ENCODE measurements at regions of chr18 and their contacts with region 1.

Region 1: DNA sequence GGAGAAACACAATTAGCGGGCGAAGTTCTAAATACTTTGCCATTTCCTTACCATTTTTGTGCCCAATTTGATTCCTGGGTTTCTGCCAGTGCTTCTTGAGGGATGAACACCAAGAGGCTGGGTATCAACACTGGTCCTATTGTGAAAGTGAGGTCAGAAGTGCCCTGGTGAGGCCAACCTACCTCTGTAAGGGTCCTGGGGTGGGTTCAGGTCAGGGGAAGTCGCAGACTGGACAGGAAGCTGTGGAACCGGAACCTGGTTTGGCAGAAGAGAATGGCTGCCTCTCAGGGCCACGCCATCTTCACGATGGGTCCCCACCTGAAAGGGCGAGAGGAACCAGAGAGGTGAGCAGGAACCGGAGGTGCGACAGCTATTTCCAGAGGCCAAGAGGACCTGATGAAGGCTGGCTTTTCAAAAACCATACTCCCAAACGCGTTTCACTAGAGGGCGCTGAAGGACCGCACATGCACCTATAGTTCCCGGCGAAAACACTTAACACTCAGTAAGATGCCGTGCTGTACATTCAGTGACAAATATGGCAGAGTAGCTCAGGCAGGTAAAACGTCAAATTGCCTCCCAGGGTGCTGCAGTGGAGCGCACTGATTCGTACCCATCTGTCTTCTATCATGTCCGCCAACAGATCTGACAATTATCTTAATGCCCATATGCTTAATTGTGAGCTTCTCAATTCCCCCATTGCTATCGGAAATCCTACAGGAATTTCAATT is 275.3 kb upstream of the CCDC68 start:
- DNase-seq: peak; percentile 48 to 79 (median 52)
- ATAC-seq: peak; percentile 93
- H3K4me3 ChIP-seq: no peak overlapping the region
- H3K27ac ChIP-seq: no peak overlapping the region
- H3K4me1 ChIP-seq: no peaks in the 10 kb centered on the region
- H3K27me3 ChIP-seq: no peaks in the 10 kb centered on the region
- CTCF ChIP-seq: peak; percentile 72 to 81 (median 78)
- EP300 ChIP-seq: no peak
- POLR2A ChIP-seq: no peak
- RAD21 ChIP-seq: peak; percentile 69 to 88

Region 2: DNA sequence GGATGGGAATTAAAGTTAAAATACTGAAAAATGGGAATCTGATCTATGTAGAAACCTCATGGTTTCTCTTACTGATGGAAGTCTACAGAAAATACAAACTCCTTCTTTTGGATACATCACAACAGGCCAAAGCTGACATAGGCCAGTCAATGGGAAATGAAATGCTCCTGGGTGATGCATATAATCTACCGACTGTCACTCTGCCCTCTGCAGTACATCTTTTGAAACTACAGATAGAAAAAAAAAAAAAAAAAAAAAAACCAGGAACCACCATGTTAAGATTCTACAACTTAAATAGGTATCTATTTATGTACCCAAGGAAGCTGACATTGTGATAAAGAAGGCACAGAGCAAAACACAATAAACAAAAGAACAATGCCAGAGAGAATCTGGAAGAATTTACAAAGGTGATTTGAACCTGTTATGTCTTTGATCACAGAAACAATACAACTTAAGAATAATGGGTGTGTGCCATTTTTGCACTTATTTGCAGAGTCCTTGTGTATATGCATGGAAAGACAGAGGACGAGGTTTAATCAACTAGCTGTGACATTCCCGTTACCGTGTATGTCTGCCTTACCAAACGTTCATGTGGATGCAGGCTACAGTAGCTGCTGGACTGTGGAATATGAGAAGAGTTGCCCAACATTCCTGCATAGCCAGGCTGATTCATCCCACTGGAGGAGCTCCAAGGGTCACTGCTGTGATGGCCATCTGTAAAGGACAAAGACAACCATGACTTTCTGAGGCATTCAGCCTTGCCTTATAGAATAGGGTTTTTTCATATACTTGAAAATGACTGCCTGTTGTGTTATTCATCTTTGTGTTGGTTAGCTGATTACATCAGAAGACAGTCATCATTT is 40.7 kb after region 1 on chr18:
- CTCF ChIA-PET with region 1: no interaction called
- POLR2A ChIA-PET with region 1: no interaction called
- in situ Hi-C with region 1: no loop called
- intact Hi-C with region 1: loop called (anchors 1 kb)
- DNase-seq: peak in 1 of 4 experiments; percentile 19
- ATAC-seq: peak; percentile 49; the same call in 1 of the 3 replicates
- H3K4me3 ChIP-seq: no peak overlapping the region
- H3K27ac ChIP-seq: no peak overlapping the region
- H3K4me1 ChIP-seq: no peaks in the 10 kb centered on the region
- H3K27me3 ChIP-seq: no peaks in the 10 kb centered on the region
- CTCF ChIP-seq: peak in 1 of 3 experiments; percentile 33; a peak in 2 of 6 replicates
- EP300 ChIP-seq: no peak
- POLR2A ChIP-seq: no peak
- RAD21 ChIP-seq: no peak

Region 3: DNA sequence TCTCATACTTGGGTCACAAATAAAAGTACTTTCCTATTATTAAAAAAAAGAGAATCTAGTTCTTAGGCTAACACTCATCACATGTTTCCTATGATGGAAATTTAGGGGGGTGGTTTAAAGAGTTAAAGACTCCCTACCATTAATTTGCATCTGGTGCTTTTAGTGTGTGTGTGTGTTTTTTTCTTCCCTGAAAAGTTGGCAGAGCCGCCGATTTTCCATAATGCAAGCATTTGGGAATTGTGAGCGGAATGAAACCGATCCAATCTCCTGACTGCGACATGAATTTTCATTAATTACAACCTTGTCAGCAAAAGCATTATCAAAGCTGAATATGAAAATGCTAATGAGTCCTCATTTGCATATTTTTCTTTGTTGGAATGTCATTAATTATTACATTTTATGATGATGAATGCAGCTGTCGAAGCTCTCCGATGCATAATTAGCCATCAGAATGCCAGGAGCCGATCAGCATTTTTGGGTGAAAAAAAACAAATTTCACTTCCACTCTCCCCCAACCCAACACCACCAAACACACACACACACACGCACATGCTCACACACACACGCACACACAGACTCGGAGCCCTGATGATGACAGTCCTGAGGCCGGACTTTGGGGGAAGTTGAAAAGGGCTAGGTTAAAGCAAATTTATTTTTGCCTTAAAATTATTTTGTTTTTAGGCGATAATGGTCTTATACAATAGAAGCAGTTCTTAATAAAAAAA is 188.1 kb after region 1 on chr18:
- CTCF ChIA-PET with region 1: no interaction called
- POLR2A ChIA-PET with region 1: no interaction called
- in situ Hi-C with region 1: no loop called
- intact Hi-C with region 1: loop called (anchors 10 kb)
- DNase-seq: no peak
- ATAC-seq: no peak
- H3K4me3 ChIP-seq: no peak overlapping the region
- H3K27ac ChIP-seq: no peak overlapping the region
- H3K4me1 ChIP-seq: no peaks in the 10 kb centered on the region; a peak in 1 of 5 replicates
- H3K27me3 ChIP-seq: no peaks in the 10 kb centered on the region
- CTCF ChIP-seq: no peak
- EP300 ChIP-seq: no peak
- POLR2A ChIP-seq: no peak
- RAD21 ChIP-seq: no peak

Region 4: GRCh38 chr18:55781481-55781957 is 547.0 kb after region 1 on chr18:
- CTCF ChIA-PET with region 1: interaction called, 8 read pairs
- POLR2A ChIA-PET with region 1: no interaction called
- in situ Hi-C with region 1: loop called (anchors 25 kb)
- intact Hi-C with region 1: loop called (anchors 1 kb)
- DNase-seq: peak in 3 of 4 experiments; percentile 11 to 54 (median 42)
- ATAC-seq: peak; percentile 75; the same call in 2 of the 3 replicates
- H3K4me3 ChIP-seq: no peak overlapping the region
- H3K27ac ChIP-seq: no peak overlapping the region
- H3K4me1 ChIP-seq: peaks cover 3 to 10% of the 10 kb centered on the region in 2 experiments; a peak in 4 of 5 replicates
- H3K27me3 ChIP-seq: no peaks in the 10 kb centered on the region
- CTCF ChIP-seq: peak; percentile 49 to 66 (median 64); a peak in 5 of 6 replicates
- EP300 ChIP-seq: no peak
- POLR2A ChIP-seq: no peak
- RAD21 ChIP-seq: peak; percentile 80 to 83

Region 5: GRCh38 chr18:56563568-56563967 is 1329.0 kb after region 1 on chr18:
- CTCF ChIA-PET with region 1: no interaction called
- POLR2A ChIA-PET with region 1: no interaction called
- in situ Hi-C with region 1: loop called (anchors 25 kb)
- intact Hi-C with region 1: no loop called
- DNase-seq: peak; percentile 41 to 68 (median 58)
- ATAC-seq: peak; percentile 99
- H3K4me3 ChIP-seq: no peak overlapping the region
- H3K27ac ChIP-seq: no peak overlapping the region
- H3K4me1 ChIP-seq: peaks cover 0 to 3% of the 10 kb centered on the region in 2 experiments; a peak in 2 of 5 replicates
- H3K27me3 ChIP-seq: peaks cover 0 to 3% of the 10 kb centered on the region in 2 experiments; a peak in 2 of 5 replicates
- CTCF ChIP-seq: peak; percentile 73 to 99 (median 76)
- EP300 ChIP-seq: no peak
- POLR2A ChIP-seq: no peak
- RAD21 ChIP-seq: peak; percentile 28 to 65; a peak in 2 of 4 replicates

Region 6: DNA sequence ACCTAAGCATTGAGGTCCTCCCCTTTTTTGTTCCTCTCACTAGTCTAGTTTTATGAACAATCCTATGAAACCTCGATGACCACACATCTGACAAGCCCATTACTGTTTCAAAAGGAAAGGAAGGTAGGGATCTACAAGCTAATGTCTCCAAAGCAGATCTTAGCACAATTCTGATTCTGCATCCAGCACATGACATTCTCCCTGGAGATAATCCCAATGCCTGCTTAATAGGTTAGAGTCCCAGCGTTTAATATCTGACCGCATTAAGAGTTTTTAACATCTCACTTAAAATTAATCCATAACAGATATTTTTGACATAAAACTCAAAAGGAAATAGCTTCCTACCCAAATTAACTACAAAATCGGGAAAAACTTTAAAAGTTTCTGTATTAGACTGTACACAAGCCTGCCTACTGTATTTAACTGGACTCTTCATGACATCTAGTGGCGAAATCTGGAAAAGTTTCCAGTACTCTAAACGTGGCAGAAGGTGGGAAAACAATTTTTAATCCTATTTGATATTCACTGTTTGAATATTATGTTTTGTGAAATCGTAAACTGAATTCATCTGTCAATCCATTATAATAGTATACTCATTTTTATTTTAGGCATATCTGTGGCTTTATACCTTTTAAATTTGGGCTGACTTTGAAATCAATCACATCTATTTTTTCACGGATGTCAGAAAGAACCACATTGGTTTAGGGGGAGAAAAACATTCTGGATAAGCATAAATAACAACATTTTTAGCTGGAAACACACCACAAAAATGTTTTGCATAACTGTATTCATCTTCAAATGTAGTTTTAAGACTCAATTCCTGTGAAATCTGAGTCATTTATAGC is 1341.5 kb after region 1 on chr18:
- CTCF ChIA-PET with region 1: interaction called, 10 read pairs
- POLR2A ChIA-PET with region 1: no interaction called
- in situ Hi-C with region 1: loop called (anchors 25 kb)
- intact Hi-C with region 1: loop called (anchors 5 kb)
- DNase-seq: peak; percentile 29 to 53 (median 34)
- ATAC-seq: peak; percentile 87
- H3K4me3 ChIP-seq: no peak overlapping the region
- H3K27ac ChIP-seq: no peak overlapping the region
- H3K4me1 ChIP-seq: peaks cover 0 to 4% of the 10 kb centered on the region in 2 experiments; a peak in 1 of 5 replicates
- H3K27me3 ChIP-seq: no peaks in the 10 kb centered on the region
- CTCF ChIP-seq: peak; percentile 41 to 57 (median 47); a peak in 5 of 6 replicates
- EP300 ChIP-seq: no peak
- POLR2A ChIP-seq: no peak
- RAD21 ChIP-seq: peak; percentile 75 to 79

Measured in K562 (cell line).